Ovary (tissue), 10 donors: ENCODE measurements at regions of chr13 and their contacts with region 1.

Region 1: GRCh38 chr13:76677043-76677442 is 209.2 kb downstream of the KCTD12 start:
- DNase-seq: peak in 4 of 5 donors; percentile 27 to 41 (median 36)
- H3K4me3 ChIP-seq: no peak overlapping the region
- H3K27ac ChIP-seq: no peak overlapping the region
- H3K4me1 ChIP-seq: peaks cover 5% of the 10 kb centered on the region
- H3K27me3 ChIP-seq: no peaks in the 10 kb centered on the region
- CTCF ChIP-seq: no peak
- EP300 ChIP-seq: no peak
- POLR2A ChIP-seq: no peak

Region 2: DNA sequence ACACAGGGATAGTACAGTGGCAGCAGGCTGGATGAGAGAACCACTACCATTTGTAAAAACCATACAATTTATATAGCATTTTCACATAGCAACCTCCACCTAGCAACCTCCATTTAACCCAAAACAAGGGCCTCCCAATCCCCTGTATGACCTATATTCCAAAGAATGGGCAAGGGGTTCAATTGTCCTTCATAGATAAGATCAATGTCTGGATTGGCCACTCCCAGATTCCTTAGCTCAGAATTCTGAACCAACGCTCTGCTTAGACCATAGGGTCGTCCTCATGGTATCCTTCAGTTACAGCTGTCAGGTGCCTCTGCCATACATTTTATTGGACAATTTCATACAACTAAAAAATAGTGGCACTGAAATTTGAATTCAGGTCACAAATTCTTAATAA is 42.9 kb after region 1 on chr13:
- intact Hi-C with region 1: loop called in 1 of 4 experiments (anchors 1 kb)
- DNase-seq: no peak
- H3K4me3 ChIP-seq: no peak overlapping the region
- H3K27ac ChIP-seq: no peak overlapping the region
- H3K4me1 ChIP-seq: peaks cover 10% of the 10 kb centered on the region
- H3K27me3 ChIP-seq: no peaks in the 10 kb centered on the region
- CTCF ChIP-seq: no peak
- EP300 ChIP-seq: no peak
- POLR2A ChIP-seq: no peak